Right ventricle myocardium superior (tissue), 1 donor: ENCODE measurements at regions of chr17 and their contacts with region 1.

Region 1: DNA sequence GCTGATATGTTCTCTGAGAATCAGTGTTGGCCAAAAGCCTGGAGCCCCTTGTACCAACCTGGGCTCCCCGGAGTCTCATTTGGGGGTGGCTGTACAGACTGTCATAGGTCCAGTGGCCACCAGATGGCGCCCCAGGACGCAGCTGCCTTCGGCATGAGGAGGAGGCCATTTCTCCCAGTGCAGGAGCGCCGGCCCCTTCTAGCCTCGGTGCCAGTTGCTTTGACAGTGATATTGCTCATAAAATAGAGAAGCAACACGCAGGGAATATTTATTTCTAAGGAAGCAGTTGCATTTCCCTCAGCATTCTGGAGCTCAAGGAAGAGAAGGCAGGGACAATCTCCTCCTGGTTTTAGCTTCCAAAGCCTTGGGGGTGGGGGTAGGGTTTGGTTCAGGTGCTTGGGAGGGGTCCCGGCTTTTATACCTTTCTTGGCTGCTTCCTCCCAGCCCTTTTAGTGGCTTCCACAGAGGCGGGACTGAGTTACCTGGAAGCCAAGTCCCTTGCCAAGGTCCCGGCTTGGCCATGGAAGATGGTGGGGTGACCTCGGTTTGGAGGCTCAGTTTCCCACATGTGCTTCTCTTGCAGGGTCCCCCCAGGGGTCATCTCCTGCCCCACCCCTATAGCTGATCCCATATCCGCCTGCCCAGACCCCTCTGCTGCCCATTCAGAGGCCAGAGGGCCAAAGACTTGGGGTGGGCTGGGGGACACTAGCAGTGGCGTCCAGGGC is 117.8 kb upstream of the CDC42EP4 start:
- DNase-seq: peak; percentile 93
- ATAC-seq: peak; percentile 97

Region 2: DNA sequence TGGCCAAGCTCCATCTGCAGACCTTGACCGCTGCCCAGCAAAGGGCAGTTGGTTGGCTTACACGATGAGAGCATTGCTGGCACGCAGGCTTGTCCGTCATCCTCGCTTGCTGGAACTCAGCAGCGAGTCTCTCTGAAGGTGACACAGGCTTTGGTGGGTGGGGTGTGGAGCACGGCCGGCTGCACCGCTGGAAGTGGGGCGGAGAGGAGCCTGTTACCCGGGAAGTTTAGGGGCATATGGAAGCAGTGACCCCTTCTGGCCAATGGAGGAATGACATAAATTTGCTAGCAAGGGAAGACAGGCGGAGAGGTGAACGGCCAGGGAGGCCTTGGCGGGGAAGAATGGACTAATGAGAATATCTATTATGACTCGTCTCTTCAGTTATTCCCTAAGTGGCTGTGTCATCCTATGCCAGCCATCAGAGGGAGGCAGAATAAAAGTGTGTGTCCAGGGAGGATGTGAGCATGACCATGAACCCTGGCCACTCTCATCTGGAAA is 280.5 kb after region 1 on chr17:
- intact Hi-C with region 1: loop called (anchors 2 kb)
- DNase-seq: peak; percentile 75
- ATAC-seq: peak; percentile 95

Region 3: DNA sequence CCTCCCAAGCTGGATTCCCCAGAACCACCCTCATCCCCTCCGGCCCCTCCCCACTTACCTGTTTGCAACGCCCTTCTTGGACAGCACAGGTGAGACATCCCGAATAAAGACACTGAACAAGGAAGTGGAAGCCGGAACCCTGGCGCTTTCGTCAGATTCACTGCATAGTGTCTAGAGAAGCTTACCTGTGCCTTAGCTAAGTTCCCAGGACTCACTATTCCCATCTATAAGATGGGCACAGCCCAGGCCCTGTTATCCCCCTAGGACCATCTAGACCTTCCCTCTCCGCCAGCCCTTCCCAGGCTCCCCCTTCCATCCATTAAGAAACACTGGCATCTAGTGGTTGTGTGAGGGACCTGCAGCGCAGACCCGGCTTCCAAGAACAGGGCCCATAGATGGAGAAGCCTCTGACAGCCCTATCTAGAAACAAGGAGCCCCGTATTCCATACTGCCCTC is 747.0 kb after region 1 on chr17:
- intact Hi-C with region 1: loop called (anchors 5 kb)
- DNase-seq: peak; percentile 61
- ATAC-seq: peak; percentile 87